Activated CD8-positive, alpha-beta T cell treated with anti-CD3 and anti-CD28 coated beads for 36 hours (primary cell): ENCODE measurements at regions of chr2 and their contacts with region 1.

Region 1: GRCh38 chr2:237512774-237513466 is 25.9 kb downstream of the MLPH start:
- DNase-seq: peak; percentile 91
- ATAC-seq: peak; percentile 91
- H3K4me3 Mint-ChIP-seq: no peak overlapping the region
- H3K27ac Mint-ChIP-seq: no peak overlapping the region
- H3K4me1 Mint-ChIP-seq: no peaks in the 10 kb centered on the region
- H3K27me3 Mint-ChIP-seq: no peaks in the 10 kb centered on the region
- CTCF ChIP-seq: peak; percentile 95

Region 2: GRCh38 chr2:237474931-237475703 is 37.8 kb before region 1 on chr2:
- CTCF ChIA-PET with region 1: interaction called, 15 read pairs
- POLR2A ChIA-PET with region 1: no interaction called
- intact Hi-C with region 1: no loop called
- DNase-seq: peak; percentile 75
- ATAC-seq: peak; percentile 85
- H3K4me3 Mint-ChIP-seq: peak overlapping the region; percentile 71
- H3K27ac Mint-ChIP-seq: peak overlapping the region; percentile 78
- H3K4me1 Mint-ChIP-seq: peaks cover 10% of the 10 kb centered on the region
- H3K27me3 Mint-ChIP-seq: peaks cover 20% of the 10 kb centered on the region
- CTCF ChIP-seq: peak; percentile 94

Region 3: DNA sequence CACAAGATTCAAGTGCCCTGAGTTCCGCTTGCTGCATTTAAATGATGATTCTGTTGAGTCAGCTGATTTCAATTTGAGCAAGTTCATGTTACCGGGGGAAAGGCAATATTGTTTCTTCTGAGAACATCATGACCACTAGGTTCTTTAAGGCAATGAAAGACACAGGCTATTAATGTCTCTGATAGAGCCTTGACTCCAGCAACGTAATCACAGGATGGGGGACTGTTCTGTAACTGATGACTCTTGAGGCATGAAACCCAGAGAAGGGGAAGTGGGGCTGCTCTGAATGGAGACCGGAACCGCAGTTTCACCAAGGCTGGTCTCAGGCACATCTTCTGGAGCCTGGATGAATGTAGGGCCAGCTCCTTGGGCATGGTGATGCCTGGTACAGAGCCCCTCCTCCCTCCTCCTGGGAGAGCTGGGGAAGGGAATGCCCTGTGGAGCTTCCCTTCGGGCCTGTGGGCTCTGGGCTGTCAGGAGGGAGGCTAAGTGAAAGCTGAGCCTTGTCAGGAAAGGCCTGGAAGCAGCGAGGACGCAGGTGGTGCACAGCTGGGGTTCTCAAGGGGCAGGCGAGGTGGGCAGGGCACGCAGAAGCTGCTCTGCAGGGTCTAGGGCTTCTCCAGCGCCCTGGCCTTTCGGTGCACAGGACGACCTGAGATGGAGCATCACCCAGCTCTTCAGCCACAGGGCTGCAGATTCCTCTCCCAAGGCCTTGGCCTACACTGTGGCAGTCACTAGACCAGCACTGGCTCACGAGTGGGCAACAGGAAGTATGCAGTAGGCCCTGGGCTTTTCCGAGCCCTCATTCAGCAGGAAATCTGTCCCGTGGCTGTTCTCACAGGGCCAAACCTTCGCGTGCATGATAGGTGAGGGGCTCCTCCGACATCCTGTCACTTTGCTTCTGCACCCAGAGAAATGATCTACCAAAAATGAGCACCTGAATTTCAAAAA is 16.8 kb after region 1 on chr2:
- CTCF ChIA-PET with region 1: interaction called, 14 read pairs
- POLR2A ChIA-PET with region 1: interaction called, 3 read pairs
- intact Hi-C with region 1: no loop called
- DNase-seq: no peak
- ATAC-seq: no peak
- H3K4me3 Mint-ChIP-seq: no peak overlapping the region
- H3K27ac Mint-ChIP-seq: no peak overlapping the region
- H3K4me1 Mint-ChIP-seq: no peaks in the 10 kb centered on the region
- H3K27me3 Mint-ChIP-seq: no peaks in the 10 kb centered on the region
- CTCF ChIP-seq: no peak

Region 4: GRCh38 chr2:237556773-237557632 is 44.1 kb after region 1 on chr2:
- CTCF ChIA-PET with region 1: interaction called, 11 read pairs
- POLR2A ChIA-PET with region 1: no interaction called
- intact Hi-C with region 1: no loop called
- DNase-seq: peak; percentile 59
- ATAC-seq: peak; percentile 91
- H3K4me3 Mint-ChIP-seq: no peak overlapping the region
- H3K27ac Mint-ChIP-seq: peak overlapping the region; percentile 18
- H3K4me1 Mint-ChIP-seq: peaks cover 12% of the 10 kb centered on the region
- H3K27me3 Mint-ChIP-seq: peaks cover 10% of the 10 kb centered on the region
- CTCF ChIP-seq: no peak

Region 5: DNA sequence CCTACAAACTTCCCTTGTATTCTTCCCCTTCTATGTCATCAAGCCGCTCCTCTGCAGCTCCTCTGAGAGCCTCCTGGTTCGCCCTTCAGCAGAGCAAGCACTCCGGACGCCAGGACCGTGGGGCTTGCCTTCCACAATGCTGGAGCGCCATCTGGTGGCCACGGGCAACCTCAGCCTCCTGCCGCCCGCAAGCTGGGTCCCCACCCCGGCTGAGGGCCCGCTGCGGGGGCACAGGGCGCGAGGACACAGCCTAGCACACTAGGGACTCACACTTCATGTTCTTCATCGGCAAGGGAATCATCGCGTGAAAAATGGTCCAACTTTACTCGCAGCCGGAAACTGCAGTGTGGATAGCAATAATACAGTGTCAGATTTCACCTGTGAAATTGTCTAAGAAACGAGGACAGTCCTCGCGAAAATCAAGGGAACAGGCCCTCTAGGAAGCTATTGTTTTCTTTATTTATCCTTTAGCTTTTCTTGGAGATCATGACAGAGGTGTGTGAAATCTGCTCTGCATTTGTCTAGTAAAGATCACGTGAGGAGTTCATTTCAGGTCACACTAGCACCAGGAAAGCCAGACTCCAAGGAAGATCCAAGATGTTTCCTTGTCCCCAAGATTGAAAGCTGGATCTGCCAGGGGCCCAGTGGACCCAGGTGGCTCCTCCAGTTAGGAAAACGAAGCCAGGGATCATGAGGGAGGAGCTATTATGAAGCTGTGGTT is 59.3 kb after region 1 on chr2:
- CTCF ChIA-PET with region 1: interaction called, 285 read pairs
- POLR2A ChIA-PET with region 1: interaction called, 5 read pairs
- intact Hi-C with region 1: loop called (anchors 2 kb)
- DNase-seq: peak; percentile 90
- ATAC-seq: peak; percentile 98
- H3K4me3 Mint-ChIP-seq: no peak overlapping the region
- H3K27ac Mint-ChIP-seq: no peak overlapping the region
- H3K4me1 Mint-ChIP-seq: peaks cover 6% of the 10 kb centered on the region
- H3K27me3 Mint-ChIP-seq: peaks cover 3% of the 10 kb centered on the region
- CTCF ChIP-seq: peak; percentile 98

Region 6: DNA sequence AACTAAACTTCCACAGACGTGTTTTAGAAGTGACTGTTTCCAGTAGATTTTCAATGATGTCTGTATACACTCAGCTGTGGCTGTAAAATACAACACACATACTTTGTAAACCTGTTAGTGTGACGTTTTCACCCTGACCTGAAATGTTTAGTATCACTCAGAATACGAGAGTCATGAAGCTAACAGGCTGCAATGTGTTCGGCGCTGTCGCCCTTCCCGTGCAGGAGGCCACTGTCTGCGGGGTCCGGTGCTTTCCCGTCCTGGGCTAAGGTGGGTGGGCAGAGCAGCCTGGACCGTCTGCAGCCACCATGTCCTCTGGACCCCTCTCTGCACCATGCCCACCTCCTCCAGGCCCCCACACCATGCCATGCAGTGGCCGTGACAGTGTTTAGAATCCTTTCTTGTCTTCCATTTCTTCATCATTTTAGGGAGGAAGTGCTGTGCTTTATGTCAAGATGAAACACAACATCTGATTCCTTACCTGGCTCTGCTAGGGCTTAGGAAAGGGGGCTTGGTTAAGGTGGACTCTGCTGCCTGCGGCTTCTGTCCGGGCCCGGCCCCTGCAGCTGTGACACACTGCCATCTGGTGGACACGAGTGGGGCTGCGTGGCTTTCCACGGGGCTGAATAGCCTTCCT is 231.8 kb after region 1 on chr2:
- CTCF ChIA-PET with region 1: interaction called, 29 read pairs
- POLR2A ChIA-PET with region 1: no interaction called
- intact Hi-C with region 1: no loop called
- DNase-seq: peak; percentile 77
- ATAC-seq: peak; percentile 81
- H3K4me3 Mint-ChIP-seq: no peak overlapping the region
- H3K27ac Mint-ChIP-seq: peak overlapping the region; percentile 67
- H3K4me1 Mint-ChIP-seq: peaks cover 39% of the 10 kb centered on the region
- H3K27me3 Mint-ChIP-seq: no peaks in the 10 kb centered on the region
- CTCF ChIP-seq: peak; percentile 94